ENCODE measurements at regions of chr3 and their contacts with region 1.

Region 1: GRCh38 chr3:47522082-47522987 is 8.8 kb upstream of the ELP6 start:
- DNase-seq: peak; percentile 73 to 80
- ATAC-seq: peak; percentile 88 to 97 (median 96)
- H3K4me3 ChIP-seq: no peak overlapping the region
- H3K27ac ChIP-seq: no peak overlapping the region
- H3K4me1 ChIP-seq: peaks cover 0 to 8% (median 4%) of the 10 kb centered on the region in 9 donors
- H3K27me3 ChIP-seq: no peaks in the 10 kb centered on the region
- CTCF ChIP-seq: peak; percentile 76 to 94 (median 90)

Region 2: DNA sequence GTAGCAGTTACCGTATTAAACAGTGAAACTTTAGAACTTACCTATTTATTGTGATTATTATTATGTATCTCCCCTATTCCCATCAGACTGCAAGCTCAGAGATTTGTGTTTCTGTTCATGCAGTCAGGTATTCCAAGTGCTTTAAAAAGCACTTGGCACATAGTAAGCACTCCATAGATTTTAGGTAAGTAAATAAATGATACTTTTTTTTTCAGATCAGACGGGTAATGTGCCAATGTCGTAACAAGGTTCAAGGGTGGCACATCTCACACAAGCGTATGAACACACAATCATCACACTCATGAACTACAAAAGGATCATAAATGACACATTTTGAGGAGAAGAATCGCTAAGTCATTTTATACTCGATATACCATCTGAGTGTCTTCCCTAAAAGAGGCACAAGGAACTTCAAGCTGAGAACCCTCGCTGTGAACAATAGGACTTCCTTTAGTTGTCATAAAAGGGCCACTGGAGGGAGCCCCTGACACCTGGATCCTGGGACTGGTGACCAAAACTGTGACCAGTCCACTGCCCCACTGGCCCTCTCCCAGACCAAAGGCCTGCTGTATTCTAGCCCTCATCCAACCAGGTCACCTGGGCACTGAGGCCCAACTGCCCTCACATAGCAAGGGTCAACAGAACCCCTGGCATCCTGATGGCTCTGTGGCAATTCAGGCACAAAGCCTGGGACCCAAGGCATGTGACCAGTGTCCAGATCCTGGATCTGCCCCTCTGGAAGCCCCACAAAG is 271.9 kb before region 1 on chr3:
- intact Hi-C with region 1: no loop called
- DNase-seq: peak; percentile 34 to 54
- ATAC-seq: peak; percentile 63 to 89 (median 82)
- H3K4me3 ChIP-seq: no peak overlapping the region
- H3K27ac ChIP-seq: no peak overlapping the region
- H3K4me1 ChIP-seq: no peaks in the 10 kb centered on the region
- H3K27me3 ChIP-seq: no peaks in the 10 kb centered on the region
- CTCF ChIP-seq: peak; percentile 30 to 74 (median 63)

Region 3: DNA sequence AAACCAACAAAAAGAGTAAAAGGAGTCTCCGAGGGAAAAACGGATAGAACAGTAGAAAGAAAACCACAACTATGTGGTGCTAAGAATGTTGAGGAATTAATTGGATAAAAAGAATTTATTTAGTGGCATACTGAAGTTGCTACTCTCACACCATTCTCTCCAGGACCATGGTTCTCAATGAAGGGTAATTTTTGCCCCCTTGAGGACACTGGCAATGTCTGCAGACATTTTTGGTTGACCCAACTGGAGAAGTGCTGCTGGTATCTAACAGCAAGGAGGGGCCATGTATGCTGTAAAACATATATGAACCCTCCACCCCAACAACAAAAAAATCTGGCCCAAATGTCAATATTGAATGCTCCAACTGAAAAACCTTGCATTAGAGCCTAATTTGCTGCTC is 142.2 kb after region 1 on chr3:
- intact Hi-C with region 1: loop called in 1 of 10 experiments (anchors 10 kb)
- DNase-seq: no peak
- ATAC-seq: no peak
- H3K4me3 ChIP-seq: no peak overlapping the region
- H3K27ac ChIP-seq: no peak overlapping the region
- H3K4me1 ChIP-seq: no peaks in the 10 kb centered on the region
- H3K27me3 ChIP-seq: no peaks in the 10 kb centered on the region
- CTCF ChIP-seq: no peak

Region 4: GRCh38 chr3:47781685-47782445 is 259.5 kb after region 1 on chr3 and contains the start of gene SMARCC1:
- intact Hi-C with region 1: loop called in 1 of 10 experiments (anchors 5 kb)
- DNase-seq: peak; percentile 97 to 99
- ATAC-seq: peak; percentile 98 to 100 (median 100)
- H3K4me3 ChIP-seq: peak within 1 kb of the TSS; percentile 56 to 94 (median 88)
- H3K27ac ChIP-seq: peak within 1 kb of the TSS; percentile 96 to 99 (median 96)
- H3K4me1 ChIP-seq: peaks cover 3 to 48% (median 33%) of the 10 kb centered on the region in 9 donors
- H3K27me3 ChIP-seq: no peaks in the 10 kb centered on the region
- CTCF ChIP-seq: peak in 2 of 9 donors; percentile 15 to 17
- total RNA-seq, gene SMARCC1: 22.5 to 34.9 (median 24.6) TPM

Region 5: DNA sequence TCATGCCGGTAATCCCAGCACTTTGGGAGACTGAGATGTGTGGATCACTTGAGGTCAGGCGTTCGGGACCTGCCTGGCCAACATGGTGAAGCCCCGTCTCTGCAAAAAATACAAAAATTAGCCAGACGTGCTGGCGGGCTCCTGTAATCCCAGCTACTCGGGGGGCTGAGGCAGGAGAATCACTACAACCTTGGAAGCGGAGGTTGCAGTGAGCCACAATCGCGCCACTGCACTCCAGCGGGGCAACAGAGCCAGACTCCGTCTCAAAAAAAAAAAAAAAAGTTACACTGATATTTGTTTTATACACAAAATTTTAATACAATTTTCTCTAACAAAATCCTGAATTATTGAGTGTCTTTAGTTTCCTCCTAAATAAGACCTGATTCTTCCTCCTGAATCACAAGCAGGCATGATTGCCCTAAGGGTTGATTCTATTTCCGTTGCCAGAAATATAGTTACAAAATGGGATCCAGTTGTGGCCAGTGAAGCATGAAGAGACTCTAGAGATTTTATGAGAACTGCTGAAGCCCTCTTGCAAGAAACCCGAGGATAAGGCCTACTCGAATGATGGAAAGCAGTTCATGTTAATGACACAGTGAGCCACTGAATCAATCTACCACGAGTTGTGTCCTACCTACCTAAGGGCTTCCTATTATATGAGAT is 269.0 kb after region 1 on chr3:
- intact Hi-C with region 1: loop called (anchors 1 to 5 kb)
- DNase-seq: no peak
- ATAC-seq: no peak
- H3K4me3 ChIP-seq: no peak overlapping the region
- H3K27ac ChIP-seq: no peak overlapping the region
- H3K4me1 ChIP-seq: peaks cover 0 to 5% (median 3%) of the 10 kb centered on the region in 9 donors
- H3K27me3 ChIP-seq: no peaks in the 10 kb centered on the region
- CTCF ChIP-seq: no peak

Measured in heart right ventricle (tissue), 16 donors.